Activated CD4-positive, alpha-beta memory T cell treated with anti-CD3 and anti-CD28 coated beads for 36 hours (primary cell): ENCODE measurements at regions of chr3 and their contacts with region 1.

Region 1: DNA sequence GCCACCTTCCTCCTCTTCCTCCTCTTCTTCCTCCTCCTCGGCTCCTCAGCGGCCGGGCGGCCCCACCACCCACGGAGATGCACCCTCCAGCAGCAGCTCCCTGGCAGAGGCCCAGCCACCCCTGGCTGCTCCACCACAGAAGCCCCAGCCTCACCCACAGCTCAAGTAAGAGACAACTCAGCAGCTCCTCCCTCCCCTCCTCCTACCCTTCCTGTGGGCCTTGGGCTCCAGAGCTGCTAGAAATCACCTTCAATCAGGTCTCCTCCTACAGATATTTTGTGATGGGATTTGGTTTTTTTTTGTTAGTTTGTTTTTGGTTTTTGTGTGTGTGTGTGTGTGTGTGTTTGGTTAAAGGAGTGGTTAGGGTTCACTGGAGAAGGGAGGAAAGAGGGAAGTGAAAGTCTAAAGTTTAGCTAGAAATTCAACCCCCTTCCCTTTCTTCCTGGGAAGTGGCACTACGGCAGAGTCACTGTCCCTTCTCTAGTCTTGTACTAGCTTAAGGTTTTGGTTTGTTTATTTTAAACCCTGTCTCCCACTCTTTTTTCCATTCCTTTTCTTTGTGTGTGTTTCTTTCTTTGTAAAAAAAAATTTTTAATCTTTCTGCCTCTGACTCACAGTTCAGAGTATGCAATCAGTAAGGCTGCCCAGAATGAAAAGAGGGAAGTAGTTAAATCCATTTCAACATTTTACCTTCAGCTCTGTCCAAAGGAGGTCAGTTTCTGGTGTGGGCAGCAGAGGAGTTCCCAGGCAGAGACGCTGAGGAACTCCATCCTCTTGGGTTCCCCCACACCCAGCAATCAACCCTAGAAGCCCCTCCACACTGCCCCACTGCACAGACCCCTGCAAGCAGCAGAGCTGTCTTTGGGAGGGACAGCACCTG is 29.0 kb upstream of the TIMP4 start:
- DNase-seq: peak; percentile 89
- H3K4me3 Mint-ChIP-seq: peak overlapping the region; percentile 59
- H3K27ac Mint-ChIP-seq: peak overlapping the region; percentile 99
- H3K4me1 Mint-ChIP-seq: peaks cover 41% of the 10 kb centered on the region
- H3K27me3 Mint-ChIP-seq: peaks cover 7% of the 10 kb centered on the region

Region 2: GRCh38 chr3:12120374-12121140 is 67.1 kb before region 1 on chr3:
- CTCF ChIA-PET with region 1: no interaction called
- POLR2A ChIA-PET with region 1: no interaction called
- intact Hi-C with region 1: no loop called
- DNase-seq: no peak
- H3K4me3 Mint-ChIP-seq: no peak overlapping the region
- H3K27ac Mint-ChIP-seq: no peak overlapping the region
- H3K4me1 Mint-ChIP-seq: no peaks in the 10 kb centered on the region
- H3K27me3 Mint-ChIP-seq: peaks cover 22% of the 10 kb centered on the region

Region 3: DNA sequence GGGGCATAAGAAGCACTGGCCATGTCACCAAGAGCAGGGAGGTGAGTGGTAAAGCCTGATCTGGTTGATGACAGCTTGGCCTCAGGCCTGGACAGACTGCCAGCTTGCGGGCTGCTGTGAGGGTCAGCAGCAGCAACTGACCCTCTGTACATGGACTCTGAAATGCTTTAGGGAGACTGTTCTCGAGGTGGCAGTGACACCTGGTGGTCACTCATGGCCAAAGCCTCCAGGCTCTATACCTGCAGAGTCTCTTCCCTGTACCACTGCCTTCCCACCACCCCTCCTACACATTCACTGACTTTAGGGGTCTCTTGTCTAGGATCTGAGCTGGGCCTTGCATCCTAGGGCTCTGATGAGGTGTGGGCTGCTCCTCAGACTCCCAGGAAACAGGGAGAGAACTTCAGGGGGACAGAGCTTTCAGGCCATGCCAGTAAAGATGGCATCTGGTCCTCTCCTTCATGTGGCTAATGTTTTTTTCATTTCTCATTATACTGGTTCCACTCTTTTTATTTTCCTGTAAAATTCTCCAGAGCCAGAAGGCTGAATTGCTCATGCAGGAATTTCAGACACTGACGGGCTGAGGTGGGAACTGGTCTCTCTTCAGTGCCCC is 11.7 kb before region 1 on chr3:
- CTCF ChIA-PET with region 1: interaction called, 67 read pairs
- POLR2A ChIA-PET with region 1: interaction called, 10 read pairs
- intact Hi-C with region 1: loop called (anchors 1 kb)
- DNase-seq: peak; percentile 62
- H3K4me3 Mint-ChIP-seq: no peak overlapping the region
- H3K27ac Mint-ChIP-seq: no peak overlapping the region
- H3K4me1 Mint-ChIP-seq: peaks cover 18% of the 10 kb centered on the region
- H3K27me3 Mint-ChIP-seq: no peaks in the 10 kb centered on the region

Region 4: GRCh38 chr3:12345141-12345561 is 157.5 kb after region 1 on chr3:
- CTCF ChIA-PET with region 1: interaction called, 3 read pairs
- POLR2A ChIA-PET with region 1: no interaction called
- intact Hi-C with region 1: loop called (anchors 2 kb)
- DNase-seq: no peak
- H3K4me3 Mint-ChIP-seq: peak overlapping the region; percentile 4
- H3K27ac Mint-ChIP-seq: peak overlapping the region; percentile 31
- H3K4me1 Mint-ChIP-seq: peaks cover 9% of the 10 kb centered on the region
- H3K27me3 Mint-ChIP-seq: peaks cover 14% of the 10 kb centered on the region